ENCODE measurements at regions of chr18 and their contacts with region 1.

Region 1: DNA sequence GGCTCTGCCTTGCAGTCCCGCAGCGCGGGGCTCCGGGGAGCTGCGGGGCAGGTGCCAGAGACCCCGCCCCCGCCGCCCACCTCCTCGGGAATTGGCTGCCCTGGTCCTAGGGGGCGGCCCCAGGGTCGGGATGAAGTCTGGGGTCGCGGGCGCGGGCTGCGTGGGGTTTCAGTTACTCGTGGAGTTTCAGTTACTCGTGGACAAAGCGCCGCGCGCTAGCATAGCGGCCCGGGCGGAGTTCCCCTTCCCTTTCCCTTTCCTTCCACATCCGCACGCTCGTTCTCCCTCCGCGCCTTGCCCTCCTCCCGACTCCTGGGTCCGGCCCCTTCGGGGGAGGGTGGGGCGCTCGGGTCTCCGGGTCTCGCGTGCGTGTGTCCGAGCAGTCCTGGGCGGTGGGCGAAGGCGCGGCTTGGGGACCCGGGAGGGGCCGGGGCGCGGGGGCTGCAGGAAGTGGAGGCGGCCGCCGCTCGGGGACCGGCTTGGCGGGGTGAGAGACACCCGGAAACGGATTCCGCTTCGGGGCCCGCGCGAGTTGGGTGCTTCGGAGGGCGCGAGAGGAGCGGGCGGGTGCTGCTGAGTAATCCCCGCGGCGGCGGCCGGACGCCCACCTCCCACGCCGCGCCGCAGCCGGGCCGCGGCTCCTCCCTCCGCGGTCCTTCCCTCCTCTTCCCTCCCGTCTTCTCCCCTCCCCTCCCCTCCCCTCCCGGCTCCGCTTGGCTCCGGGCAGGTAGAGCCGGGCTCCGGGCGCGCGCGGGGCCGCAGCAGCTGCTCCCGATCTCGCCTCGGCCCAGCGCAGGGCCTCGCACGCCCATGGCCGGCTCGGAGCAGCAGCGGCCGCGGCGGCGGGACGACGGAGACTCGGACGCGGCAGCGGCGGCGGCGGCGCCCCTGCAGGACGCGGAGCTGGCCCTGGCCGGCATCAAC is at the start of gene TTC39C:
- DNase-seq: peak; percentile 69

Region 2: GRCh38 chr18:23998811-23999210 is 15.5 kb before region 1 on chr18:
- CTCF ChIA-PET with region 1: no interaction called
- POLR2A ChIA-PET with region 1: interaction called, 12 read pairs
- DNase-seq: no peak